ENCODE measurements at regions of chr15 and their contacts with region 1.

Region 1: DNA sequence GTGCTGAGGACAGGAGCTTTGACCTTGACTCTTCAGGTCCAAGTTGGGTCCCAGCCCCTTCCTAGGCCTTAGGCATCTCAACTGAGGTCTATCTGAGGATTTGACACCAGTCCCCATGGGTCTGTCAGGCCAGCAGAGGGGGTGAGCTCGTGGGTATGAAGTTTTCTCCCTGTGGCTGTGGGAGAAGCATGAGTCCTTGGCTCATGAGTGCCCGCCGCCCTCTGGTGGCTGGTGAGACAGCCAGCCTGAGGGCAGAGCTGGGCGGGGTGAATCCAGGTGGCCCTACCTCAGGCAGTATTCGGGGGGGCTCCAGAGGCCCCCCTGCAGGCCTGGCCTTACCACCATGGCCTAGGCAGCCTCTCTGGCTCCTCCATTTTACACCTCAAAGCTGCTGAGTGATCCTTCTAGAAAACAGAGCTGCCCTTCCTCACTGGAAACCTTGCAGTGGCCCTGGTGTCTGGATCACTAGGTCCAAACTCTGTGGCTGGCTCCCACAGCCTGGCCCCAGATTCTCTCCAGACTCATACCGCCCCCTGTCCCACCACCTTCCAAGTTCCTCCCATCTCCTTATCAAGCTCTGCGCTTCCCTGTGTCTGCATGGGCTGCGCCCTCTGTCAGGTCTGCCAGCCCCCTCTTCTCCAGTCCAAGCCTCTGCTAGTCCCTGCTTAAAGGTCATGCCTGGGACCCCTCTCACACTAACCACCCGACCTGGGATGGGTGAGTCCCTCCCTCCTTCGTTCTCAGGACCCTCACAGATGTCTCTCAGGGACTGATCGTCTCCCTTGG is 16.1 kb downstream of the SH2D7 start:
- DNase-seq: peak; percentile 88
- H3K4me3 Mint-ChIP-seq: no peak overlapping the region
- H3K27ac Mint-ChIP-seq: no peak overlapping the region
- H3K4me1 Mint-ChIP-seq: peaks cover 51% of the 10 kb centered on the region
- H3K27me3 Mint-ChIP-seq: no peaks in the 10 kb centered on the region

Region 2: GRCh38 chr15:77959432-77959879 is 149.0 kb before region 1 on chr15:
- CTCF ChIA-PET with region 1: interaction called, 190 read pairs
- POLR2A ChIA-PET with region 1: interaction called, 4 read pairs
- DNase-seq: peak; percentile 82
- H3K4me3 Mint-ChIP-seq: peak overlapping the region; percentile 60
- H3K27ac Mint-ChIP-seq: no peak overlapping the region
- H3K4me1 Mint-ChIP-seq: peaks cover 32% of the 10 kb centered on the region
- H3K27me3 Mint-ChIP-seq: peaks cover 34% of the 10 kb centered on the region

Region 3: DNA sequence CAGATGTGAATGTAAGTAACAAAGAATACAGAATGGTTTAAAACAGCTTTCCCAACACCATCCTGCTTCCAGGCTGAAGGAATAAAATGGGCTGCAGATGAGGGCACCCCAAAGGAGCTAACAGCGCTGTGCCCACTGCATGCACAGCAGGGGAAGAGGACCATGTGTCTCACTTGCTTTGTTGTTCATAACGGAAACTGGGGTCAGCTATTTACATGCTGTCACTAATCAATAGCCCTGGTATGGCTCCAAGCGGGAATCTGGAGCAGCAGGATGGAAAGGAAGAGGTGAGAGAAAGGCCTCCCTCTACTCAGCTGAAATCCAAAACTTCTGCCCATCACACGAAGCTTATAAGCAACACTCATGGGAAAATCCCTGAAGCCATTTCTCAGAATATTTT is 98.4 kb before region 1 on chr15:
- CTCF ChIA-PET with region 1: interaction called, 26 read pairs
- POLR2A ChIA-PET with region 1: interaction called, 3 read pairs
- DNase-seq: no peak
- H3K4me3 Mint-ChIP-seq: no peak overlapping the region
- H3K27ac Mint-ChIP-seq: no peak overlapping the region
- H3K4me1 Mint-ChIP-seq: peaks cover 9% of the 10 kb centered on the region
- H3K27me3 Mint-ChIP-seq: no peaks in the 10 kb centered on the region

Region 4: GRCh38 chr15:78044407-78045155 is 63.9 kb before region 1 on chr15:
- CTCF ChIA-PET with region 1: interaction called, 48 read pairs
- POLR2A ChIA-PET with region 1: interaction called, 22 read pairs
- DNase-seq: no peak
- H3K4me3 Mint-ChIP-seq: no peak overlapping the region
- H3K27ac Mint-ChIP-seq: peak overlapping the region; percentile 86
- H3K4me1 Mint-ChIP-seq: peaks cover 94% of the 10 kb centered on the region
- H3K27me3 Mint-ChIP-seq: no peaks in the 10 kb centered on the region

Region 5: GRCh38 chr15:78067328-78068228 is 40.9 kb before region 1 on chr15:
- CTCF ChIA-PET with region 1: interaction called, 61 read pairs
- POLR2A ChIA-PET with region 1: interaction called, 24 read pairs
- DNase-seq: no peak
- H3K4me3 Mint-ChIP-seq: peak overlapping the region; percentile 70
- H3K27ac Mint-ChIP-seq: no peak overlapping the region
- H3K4me1 Mint-ChIP-seq: peaks cover 16% of the 10 kb centered on the region
- H3K27me3 Mint-ChIP-seq: no peaks in the 10 kb centered on the region

Region 6: GRCh38 chr15:78195735-78196201 is 87.3 kb after region 1 on chr15:
- CTCF ChIA-PET with region 1: interaction called, 85 read pairs
- POLR2A ChIA-PET with region 1: interaction called, 6 read pairs
- DNase-seq: peak; percentile 58
- H3K4me3 Mint-ChIP-seq: no peak overlapping the region
- H3K27ac Mint-ChIP-seq: no peak overlapping the region
- H3K4me1 Mint-ChIP-seq: no peaks in the 10 kb centered on the region
- H3K27me3 Mint-ChIP-seq: no peaks in the 10 kb centered on the region

Measured in activated CD4-positive, alpha-beta memory T cell treated with anti-CD3 and anti-CD28 coated beads, Interleukin-2, amount 10 ng/mL, durations not matched to agents 7 days and 5 days (primary cell).